ENCODE measurements at regions of chr21 and their contacts with region 1.

Region 1: GRCh38 chr21:39037807-39038405 is 145.3 kb downstream of the PSMG1 start:
- DNase-seq: peak in 1 of 2 experiments; percentile 78
- H3K4me3 ChIP-seq: no peak overlapping the region
- H3K27ac ChIP-seq: no peak overlapping the region
- H3K4me1 ChIP-seq: peaks cover 0 to 4% (median 2%) of the 10 kb centered on the region in 4 experiments; a peak in 4 of 7 replicates
- H3K27me3 ChIP-seq: no peaks in the 10 kb centered on the region; a peak in 1 of 7 replicates
- CTCF ChIP-seq: peak; percentile 60 to 69 (median 61)
- EP300 ChIP-seq: no peak
- POLR2A ChIP-seq: no peak
- RAD21 ChIP-seq: peak; percentile 56 to 73

Region 2: GRCh38 chr21:38888991-38889561 is 148.8 kb before region 1 on chr21:
- CTCF ChIA-PET with region 1: no interaction called
- POLR2A ChIA-PET with region 1: no interaction called
- DNase-seq: no peak
- H3K4me3 ChIP-seq: no peak overlapping the region
- H3K27ac ChIP-seq: no peak overlapping the region
- H3K4me1 ChIP-seq: no peaks in the 10 kb centered on the region
- H3K27me3 ChIP-seq: no peaks in the 10 kb centered on the region
- CTCF ChIP-seq: no peak
- EP300 ChIP-seq: no peak
- POLR2A ChIP-seq: no peak
- RAD21 ChIP-seq: no peak

Region 3: DNA sequence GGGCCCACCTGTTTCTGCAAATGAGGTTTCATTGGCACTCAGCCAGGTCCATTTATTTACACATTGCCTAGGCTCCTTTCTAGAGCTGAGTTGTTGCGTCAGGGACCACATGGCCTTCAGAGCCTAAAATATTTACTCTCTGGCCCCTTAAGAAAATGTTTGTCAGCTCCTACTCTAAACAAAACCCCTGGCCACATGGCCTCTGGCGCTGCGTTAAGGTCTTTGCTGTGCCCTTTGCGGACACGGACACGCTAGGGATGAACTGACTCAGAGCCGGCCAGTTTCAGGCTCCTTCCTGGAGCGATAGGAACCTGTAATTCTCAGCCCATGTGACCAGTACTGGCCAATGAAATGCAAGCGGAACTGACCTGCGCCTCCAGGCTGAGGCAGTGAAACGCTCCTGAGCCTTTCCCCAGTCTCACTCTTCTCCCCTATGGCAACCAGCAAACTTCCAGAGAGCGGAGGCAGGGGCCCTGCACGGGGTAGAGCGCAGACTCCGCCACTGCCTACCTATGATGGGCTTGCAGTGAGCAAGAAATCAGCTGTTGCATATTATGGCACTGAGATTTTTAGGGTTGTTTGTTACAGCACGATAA is 71.9 kb before region 1 on chr21:
- CTCF ChIA-PET with region 1: interaction called, 11 read pairs
- POLR2A ChIA-PET with region 1: interaction called, 3 read pairs
- DNase-seq: peak in 1 of 2 experiments; percentile 62
- H3K4me3 ChIP-seq: no peak overlapping the region
- H3K27ac ChIP-seq: no peak overlapping the region
- H3K4me1 ChIP-seq: peaks cover 0 to 5% (median 0%) of the 10 kb centered on the region in 4 experiments; a peak in 2 of 7 replicates
- H3K27me3 ChIP-seq: no peaks in the 10 kb centered on the region
- CTCF ChIP-seq: no peak
- EP300 ChIP-seq: no peak
- POLR2A ChIP-seq: no peak
- RAD21 ChIP-seq: no peak